Right cardiac atrium (tissue), 5 donors: ENCODE measurements at regions of chr1 and their contacts with region 1.

Region 1: GRCh38 chr1:151993654-151994496 is at the start of gene S100A10:
- DNase-seq: peak; percentile 90 to 96 (median 95)
- ATAC-seq: peak; percentile 86 to 91
- H3K4me3 ChIP-seq: peak within 1 kb of the TSS; percentile 86
- H3K27ac ChIP-seq: peak within 1 kb of the TSS; percentile 91
- H3K4me1 ChIP-seq: peaks cover 9% of the 10 kb centered on the region
- H3K27me3 ChIP-seq: no peaks in the 10 kb centered on the region
- total RNA-seq, gene S100A10: 108 to 245 (median 200) TPM

Region 2: DNA sequence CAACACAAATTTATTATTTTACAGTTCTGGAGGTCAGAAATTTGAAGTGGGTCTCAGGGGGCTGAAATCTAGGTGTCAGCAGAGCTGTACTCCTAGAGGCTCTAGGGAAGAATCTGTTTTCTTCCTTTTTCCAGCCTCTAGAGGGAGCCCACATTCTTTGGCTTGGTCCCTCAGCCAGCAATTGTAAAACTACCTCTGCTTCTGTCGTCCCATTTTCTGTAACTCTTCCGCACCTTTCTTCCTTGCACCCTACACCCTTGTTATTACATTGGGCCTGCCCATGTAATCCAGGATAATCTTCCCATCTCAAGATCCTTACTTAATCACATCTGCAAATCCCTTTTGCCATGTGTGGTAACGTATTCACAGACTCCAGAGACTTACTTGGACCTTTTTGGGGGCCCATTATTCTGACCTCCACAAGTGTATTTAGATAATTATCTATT is 59.8 kb before region 1 on chr1:
- intact Hi-C with region 1: loop called (anchors 2 to 5 kb)
- DNase-seq: no peak
- ATAC-seq: peak; percentile 84 to 91
- H3K4me3 ChIP-seq: no peak overlapping the region
- H3K27ac ChIP-seq: no peak overlapping the region
- H3K4me1 ChIP-seq: no peaks in the 10 kb centered on the region
- H3K27me3 ChIP-seq: no peaks in the 10 kb centered on the region

Region 3: DNA sequence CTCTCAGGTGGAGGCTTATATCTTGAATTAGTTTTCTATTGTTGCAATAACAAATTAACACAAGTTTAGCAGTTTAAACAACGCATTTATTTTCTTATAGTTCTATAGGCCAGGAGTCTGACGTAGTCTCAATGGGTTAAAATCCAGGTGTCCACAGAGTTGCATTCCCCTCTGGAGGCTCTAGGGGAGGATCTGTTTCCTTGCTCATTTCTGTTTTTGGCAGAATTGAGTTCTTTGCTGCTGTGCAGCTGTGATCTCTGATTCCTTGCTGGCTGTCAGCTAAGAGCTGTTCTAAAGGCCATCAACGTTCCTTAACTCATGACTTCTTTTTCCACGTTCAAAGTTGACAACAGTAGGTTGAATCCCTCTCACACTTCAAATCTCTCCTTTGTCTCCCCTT is 32.0 kb before region 1 on chr1:
- intact Hi-C with region 1: loop called in 1 of 4 experiments (anchors 5 kb)
- DNase-seq: no peak
- ATAC-seq: no peak
- H3K4me3 ChIP-seq: no peak overlapping the region
- H3K27ac ChIP-seq: no peak overlapping the region
- H3K4me1 ChIP-seq: no peaks in the 10 kb centered on the region
- H3K27me3 ChIP-seq: no peaks in the 10 kb centered on the region